ENCODE measurements at regions of chr6 and their contacts with region 1.

Region 1: GRCh38 chr6:22133357-22133756 is 163.5 kb downstream of the PRL start:
- DNase-seq: no peak
- H3K4me3 ChIP-seq: no peak overlapping the region
- CTCF ChIP-seq: no peak

Region 2: DNA sequence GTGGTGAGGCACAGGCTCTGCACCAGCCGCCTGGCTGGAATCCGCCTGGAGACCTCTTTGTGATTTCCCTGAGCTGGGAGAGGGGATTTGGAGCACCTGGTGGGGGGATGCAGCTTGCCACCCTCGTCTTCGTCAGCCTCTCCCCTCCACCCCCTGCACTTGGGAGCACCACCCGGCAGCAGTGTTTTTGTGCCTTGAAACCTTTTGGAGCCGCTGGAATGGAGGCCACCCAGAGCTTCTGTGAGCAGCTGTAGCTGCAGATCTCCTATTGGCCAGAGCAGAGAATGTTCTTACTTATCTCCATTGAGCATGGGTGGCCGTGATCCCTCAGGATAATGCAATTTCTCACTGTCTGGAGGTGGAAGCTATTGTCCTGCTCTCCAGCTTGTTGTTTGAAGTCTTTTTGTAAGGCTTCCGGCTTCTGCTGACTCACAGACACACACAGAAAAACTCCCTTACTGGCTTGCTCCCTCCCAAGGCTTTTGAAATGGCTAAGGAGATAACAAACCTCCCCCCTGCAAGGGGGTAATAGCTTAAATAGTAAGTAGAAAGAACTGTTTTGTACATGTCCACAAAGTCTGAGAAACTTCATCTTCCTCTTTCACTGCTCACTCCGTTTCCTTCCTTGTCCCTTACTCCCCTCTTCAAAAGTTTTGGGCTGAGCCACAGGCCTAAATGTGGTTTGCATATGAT is 107.7 kb before region 1 on chr6:
- in situ Hi-C with region 1: loop called (anchors 5 kb)
- DNase-seq: peak; percentile 58
- H3K4me3 ChIP-seq: no peak overlapping the region
- CTCF ChIP-seq: no peak

Region 3: DNA sequence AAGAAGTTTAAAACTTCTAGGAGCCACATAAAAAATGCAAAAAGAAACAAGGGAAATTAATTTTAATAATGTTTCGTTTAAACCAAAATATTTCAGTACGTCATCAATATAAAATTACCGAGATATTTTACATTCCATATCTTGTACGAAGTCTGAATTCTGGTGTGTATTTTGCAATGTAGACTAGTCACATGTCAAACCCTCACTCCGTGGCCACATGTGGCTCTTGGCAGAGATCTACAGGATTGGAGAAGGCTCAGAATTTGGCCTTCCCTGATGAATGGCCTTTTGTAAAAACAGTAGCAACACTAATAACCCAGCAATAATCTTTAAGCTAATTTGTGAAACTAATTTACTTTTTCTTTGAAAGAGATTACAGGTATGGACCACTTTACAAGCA is 53.6 kb before region 1 on chr6:
- in situ Hi-C with region 1: no loop called
- DNase-seq: peak; percentile 68
- H3K4me3 ChIP-seq: no peak overlapping the region
- CTCF ChIP-seq: no peak

Region 4: DNA sequence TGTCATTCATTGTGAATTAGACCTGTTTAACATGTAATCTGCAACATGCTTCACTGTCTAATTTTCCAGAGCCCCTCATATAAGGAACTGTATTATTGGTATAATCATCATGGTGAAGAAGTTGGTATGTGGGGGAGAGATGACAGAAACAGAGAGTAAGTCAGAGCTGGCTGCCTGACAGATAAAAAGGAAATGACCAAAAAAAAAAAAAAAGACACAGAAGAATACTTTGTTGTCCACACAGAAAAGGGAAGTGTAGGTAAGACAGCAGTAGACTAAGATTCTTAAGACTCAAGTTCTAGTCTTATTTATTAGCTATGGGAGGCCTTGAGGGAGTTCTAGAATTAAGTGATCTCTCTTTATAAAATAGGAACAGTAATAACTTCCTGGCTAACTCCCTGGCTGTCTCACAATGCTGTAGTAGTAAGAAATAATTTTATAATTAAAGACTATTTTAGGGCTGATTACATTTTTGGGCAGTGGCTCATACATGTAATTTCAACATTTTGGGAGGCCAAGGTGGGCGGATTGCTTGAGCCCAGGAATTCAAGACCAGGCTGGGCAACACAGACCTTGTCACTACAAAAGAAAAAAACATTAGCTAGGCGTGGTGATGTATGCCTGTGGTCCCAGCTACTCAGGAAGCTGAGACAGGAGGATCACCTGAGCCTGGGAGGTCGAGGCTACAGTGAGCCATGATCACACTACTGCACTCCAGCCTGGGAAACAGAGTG is 61.0 kb after region 1 on chr6:
- in situ Hi-C with region 1: no loop called
- DNase-seq: no peak
- H3K4me3 ChIP-seq: no peak overlapping the region
- CTCF ChIP-seq: no peak